OCI-LY7 (cell line): ENCODE measurements at regions of chr7 and their contacts with region 1.

Region 1: GRCh38 chr7:70693686-70694360 is 438.1 kb upstream of the GALNT17 start:
- DNase-seq: peak; percentile 81
- H3K4me3 ChIP-seq: peak overlapping the region; percentile 79
- H3K27ac ChIP-seq: no peak overlapping the region
- H3K4me1 ChIP-seq: peaks cover 23% of the 10 kb centered on the region
- CTCF ChIP-seq: no peak

Region 2: GRCh38 chr7:69953136-69954067 is 740.4 kb before region 1 on chr7:
- CTCF ChIA-PET with region 1: no interaction called
- POLR2A ChIA-PET with region 1: no interaction called
- intact Hi-C with region 1: loop called (anchors 10 kb)
- DNase-seq: peak; percentile 86
- H3K4me3 ChIP-seq: peak overlapping the region; percentile 42
- H3K27ac ChIP-seq: peak overlapping the region; percentile 96
- H3K4me1 ChIP-seq: peaks cover 70% of the 10 kb centered on the region
- CTCF ChIP-seq: no peak

Region 3: GRCh38 chr7:70156057-70156456 is 537.8 kb before region 1 on chr7:
- CTCF ChIA-PET with region 1: no interaction called
- POLR2A ChIA-PET with region 1: no interaction called
- intact Hi-C with region 1: loop called (anchors 5 kb)
- DNase-seq: no peak
- H3K4me3 ChIP-seq: no peak overlapping the region
- H3K27ac ChIP-seq: no peak overlapping the region
- H3K4me1 ChIP-seq: no peaks in the 10 kb centered on the region
- CTCF ChIP-seq: no peak

Region 4: DNA sequence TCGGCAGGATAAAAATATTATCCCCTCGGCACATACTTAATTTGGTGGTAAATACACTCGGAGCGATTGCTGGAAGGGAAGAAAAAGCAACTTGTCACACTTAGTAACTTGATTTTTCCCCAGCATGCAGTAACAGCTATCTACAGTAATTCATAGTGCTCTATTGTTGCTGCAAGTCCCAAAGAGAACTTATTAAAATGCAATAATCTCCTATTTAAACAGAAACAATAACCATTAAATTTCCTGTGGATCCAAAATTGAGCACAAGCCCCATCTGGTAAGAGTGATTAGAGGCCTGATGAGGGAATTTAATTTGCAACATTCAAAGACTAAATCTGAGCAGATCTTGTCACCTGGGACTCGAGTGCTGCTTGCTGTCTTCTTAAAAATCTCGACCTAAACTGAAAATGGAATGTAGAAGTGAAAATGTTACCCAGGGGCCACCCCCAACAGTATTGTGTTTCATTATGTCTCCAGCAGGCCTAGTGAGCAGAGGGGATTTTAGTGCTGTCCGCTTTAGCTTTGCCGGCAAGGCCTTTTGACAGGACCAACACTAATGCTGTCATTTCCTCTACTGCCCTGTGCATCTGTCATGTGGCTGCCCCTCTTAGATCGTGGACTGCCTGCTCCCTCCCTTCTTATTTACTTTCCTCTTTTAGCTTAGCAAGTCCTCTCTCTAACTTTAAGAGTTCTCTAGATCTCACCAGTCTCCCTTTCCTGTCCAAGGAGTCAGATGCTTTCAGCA is 455.8 kb before region 1 on chr7:
- CTCF ChIA-PET with region 1: no interaction called
- POLR2A ChIA-PET with region 1: no interaction called
- intact Hi-C with region 1: loop called (anchors 1 kb)
- DNase-seq: peak; percentile 79
- H3K4me3 ChIP-seq: peak overlapping the region; percentile 1
- H3K27ac ChIP-seq: peak overlapping the region; percentile 72
- H3K4me1 ChIP-seq: peaks cover 22% of the 10 kb centered on the region
- CTCF ChIP-seq: no peak

Region 5: DNA sequence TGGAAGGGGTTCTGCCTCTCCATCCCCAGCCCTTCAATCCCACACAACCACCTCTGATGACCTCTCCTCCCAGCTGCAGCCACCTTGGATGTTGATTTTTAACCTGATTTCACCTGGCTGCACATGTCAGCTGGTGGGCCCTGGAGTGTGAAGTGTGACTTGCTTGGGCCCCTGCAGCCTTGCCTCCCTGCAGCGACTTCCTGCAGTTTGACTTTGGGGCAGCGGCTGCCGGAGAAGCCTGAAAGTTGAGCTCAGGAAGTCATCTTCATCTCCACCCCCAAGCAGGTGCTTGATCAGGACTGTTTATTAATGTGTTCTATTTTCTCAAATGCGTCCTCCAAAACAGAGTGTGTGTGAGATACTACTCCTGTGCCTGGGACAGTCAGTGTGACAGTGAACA is 237.1 kb before region 1 on chr7:
- CTCF ChIA-PET with region 1: no interaction called
- POLR2A ChIA-PET with region 1: no interaction called
- intact Hi-C with region 1: loop called (anchors 2 kb)
- DNase-seq: peak; percentile 96
- H3K4me3 ChIP-seq: peak overlapping the region; percentile 41
- H3K27ac ChIP-seq: peak overlapping the region; percentile 95
- H3K4me1 ChIP-seq: peaks cover 54% of the 10 kb centered on the region
- CTCF ChIP-seq: no peak

Region 6: DNA sequence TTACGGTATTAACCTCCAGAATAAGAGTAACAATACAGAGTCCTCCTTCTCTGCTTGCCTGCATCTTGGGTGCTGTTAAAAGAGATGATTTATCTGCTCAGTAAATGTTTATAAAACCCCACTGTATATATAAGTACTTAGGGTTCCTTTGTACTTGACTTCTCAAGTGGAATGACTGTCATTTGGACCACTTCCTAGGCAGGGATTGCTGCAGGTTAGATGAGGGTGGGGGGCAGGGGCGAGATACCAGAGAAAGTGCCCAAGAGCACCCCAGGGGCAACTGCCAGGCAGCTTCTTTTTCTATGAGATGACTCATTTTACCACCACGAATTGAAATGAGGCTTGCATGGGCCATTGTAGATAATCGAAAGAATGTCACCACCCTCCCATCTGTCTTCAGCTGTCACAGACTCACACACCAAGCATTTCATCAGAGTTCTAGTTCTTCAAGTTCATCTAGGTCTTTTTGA is 16.2 kb after region 1 on chr7:
- CTCF ChIA-PET with region 1: no interaction called
- POLR2A ChIA-PET with region 1: no interaction called
- intact Hi-C with region 1: no loop called
- DNase-seq: no peak
- H3K4me3 ChIP-seq: no peak overlapping the region
- H3K27ac ChIP-seq: no peak overlapping the region
- H3K4me1 ChIP-seq: no peaks in the 10 kb centered on the region
- CTCF ChIP-seq: no peak